Calu3 (cell line): ENCODE measurements at regions of chr15 and their contacts with region 1.

Region 1: DNA sequence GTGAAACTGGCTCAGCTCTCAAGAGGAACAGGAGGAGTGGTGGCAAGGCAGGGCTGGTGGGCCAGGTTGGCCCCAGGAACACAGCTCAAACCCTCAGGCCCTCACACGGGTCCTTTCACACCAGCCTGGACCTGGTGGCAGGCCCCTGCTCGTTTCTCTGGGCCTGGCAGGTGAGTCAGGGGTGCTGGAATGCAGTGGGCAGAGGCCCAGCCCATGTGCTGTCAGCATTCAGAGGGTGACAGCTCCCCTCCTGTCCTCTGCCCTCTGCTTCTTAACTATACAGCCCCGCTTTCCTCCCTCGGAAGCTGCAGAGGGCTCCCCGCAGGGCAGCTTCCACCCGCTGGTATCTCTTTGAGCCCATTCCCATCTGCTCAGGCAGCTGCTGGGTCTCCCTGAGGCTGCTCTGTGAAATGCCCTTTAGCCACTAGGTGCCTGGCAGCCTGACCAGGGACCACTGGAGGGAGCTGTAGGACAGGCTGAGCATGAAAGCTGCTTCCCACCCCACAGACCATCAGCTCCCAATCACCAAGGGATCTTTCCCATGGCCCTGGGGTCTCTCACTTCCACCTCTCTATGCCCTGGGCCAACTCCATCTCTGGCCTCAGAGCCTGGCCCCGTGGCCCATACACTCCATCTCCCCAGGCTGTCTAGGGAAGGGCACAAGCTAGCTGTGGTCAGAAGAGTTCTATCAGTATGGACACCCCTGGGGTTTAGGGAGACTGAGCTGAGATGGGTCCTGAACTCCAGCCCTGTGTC is 24.8 kb downstream of the SHF start:
- DNase-seq: peak; percentile 86
- H3K4me3 Mint-ChIP-seq: no peak overlapping the region
- H3K27ac Mint-ChIP-seq: no peak overlapping the region
- H3K4me1 Mint-ChIP-seq: peaks cover 13% of the 10 kb centered on the region
- H3K27me3 Mint-ChIP-seq: no peaks in the 10 kb centered on the region
- CTCF ChIP-seq: peak; percentile 69

Region 2: GRCh38 chr15:45118131-45118588 is 44.8 kb before region 1 on chr15:
- CTCF ChIA-PET with region 1: interaction called, 14 read pairs
- intact Hi-C with region 1: no loop called
- DNase-seq: peak; percentile 89
- H3K4me3 Mint-ChIP-seq: no peak overlapping the region
- H3K27ac Mint-ChIP-seq: no peak overlapping the region
- H3K4me1 Mint-ChIP-seq: peaks cover 21% of the 10 kb centered on the region
- H3K27me3 Mint-ChIP-seq: peaks cover 60% of the 10 kb centered on the region
- CTCF ChIP-seq: peak; percentile 87

Region 3: GRCh38 chr15:45198337-45199135 is 35.6 kb after region 1 on chr15:
- CTCF ChIA-PET with region 1: interaction called, 33 read pairs
- intact Hi-C with region 1: loop called (anchors 1 kb)
- DNase-seq: peak; percentile 93
- H3K4me3 Mint-ChIP-seq: no peak overlapping the region
- H3K27ac Mint-ChIP-seq: no peak overlapping the region
- H3K4me1 Mint-ChIP-seq: no peaks in the 10 kb centered on the region
- H3K27me3 Mint-ChIP-seq: no peaks in the 10 kb centered on the region
- CTCF ChIP-seq: peak; percentile 57

Region 4: DNA sequence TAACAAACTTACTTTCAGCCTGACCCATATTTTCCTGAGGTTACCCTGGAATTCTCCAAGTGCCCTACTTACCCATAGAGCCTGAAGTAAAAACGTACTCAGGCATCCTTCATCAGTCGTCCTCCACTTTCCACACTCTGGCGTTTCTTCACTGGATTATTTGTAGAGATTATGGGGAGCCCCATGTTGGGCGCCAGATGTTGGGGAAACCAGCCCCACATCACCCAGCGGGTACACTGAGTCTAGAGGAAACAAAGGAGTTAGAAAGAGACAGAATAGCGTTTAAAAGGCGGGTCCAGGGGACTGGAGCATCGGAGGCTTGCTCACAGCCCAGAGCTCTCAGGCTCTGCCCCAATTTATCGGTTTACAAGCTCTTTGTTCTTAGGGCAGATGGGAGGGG is 79.3 kb after region 1 on chr15:
- CTCF ChIA-PET with region 1: no interaction called
- intact Hi-C with region 1: no loop called
- DNase-seq: peak; percentile 15
- H3K4me3 Mint-ChIP-seq: no peak overlapping the region
- H3K27ac Mint-ChIP-seq: no peak overlapping the region
- H3K4me1 Mint-ChIP-seq: no peaks in the 10 kb centered on the region
- H3K27me3 Mint-ChIP-seq: no peaks in the 10 kb centered on the region
- CTCF ChIP-seq: no peak

Region 5: GRCh38 chr15:45268135-45268534 is 105.2 kb after region 1 on chr15:
- CTCF ChIA-PET with region 1: interaction called, 3 read pairs
- intact Hi-C with region 1: loop called (anchors 2 kb)
- DNase-seq: peak; percentile 74
- H3K4me3 Mint-ChIP-seq: no peak overlapping the region
- H3K27ac Mint-ChIP-seq: no peak overlapping the region
- H3K4me1 Mint-ChIP-seq: no peaks in the 10 kb centered on the region
- H3K27me3 Mint-ChIP-seq: no peaks in the 10 kb centered on the region
- CTCF ChIP-seq: peak; percentile 22

Region 6: GRCh38 chr15:45399381-45400212 is 236.6 kb after region 1 on chr15:
- CTCF ChIA-PET with region 1: interaction called, 6 read pairs
- intact Hi-C with region 1: loop called (anchors 5 kb)
- DNase-seq: no peak
- H3K4me3 Mint-ChIP-seq: no peak overlapping the region
- H3K27ac Mint-ChIP-seq: no peak overlapping the region
- H3K4me1 Mint-ChIP-seq: peaks cover 21% of the 10 kb centered on the region
- H3K27me3 Mint-ChIP-seq: no peaks in the 10 kb centered on the region
- CTCF ChIP-seq: peak; percentile 49